Endothelial cell of umbilical vein (primary cell): ENCODE measurements at regions of chr5 and their contacts with region 1.

Region 1: DNA sequence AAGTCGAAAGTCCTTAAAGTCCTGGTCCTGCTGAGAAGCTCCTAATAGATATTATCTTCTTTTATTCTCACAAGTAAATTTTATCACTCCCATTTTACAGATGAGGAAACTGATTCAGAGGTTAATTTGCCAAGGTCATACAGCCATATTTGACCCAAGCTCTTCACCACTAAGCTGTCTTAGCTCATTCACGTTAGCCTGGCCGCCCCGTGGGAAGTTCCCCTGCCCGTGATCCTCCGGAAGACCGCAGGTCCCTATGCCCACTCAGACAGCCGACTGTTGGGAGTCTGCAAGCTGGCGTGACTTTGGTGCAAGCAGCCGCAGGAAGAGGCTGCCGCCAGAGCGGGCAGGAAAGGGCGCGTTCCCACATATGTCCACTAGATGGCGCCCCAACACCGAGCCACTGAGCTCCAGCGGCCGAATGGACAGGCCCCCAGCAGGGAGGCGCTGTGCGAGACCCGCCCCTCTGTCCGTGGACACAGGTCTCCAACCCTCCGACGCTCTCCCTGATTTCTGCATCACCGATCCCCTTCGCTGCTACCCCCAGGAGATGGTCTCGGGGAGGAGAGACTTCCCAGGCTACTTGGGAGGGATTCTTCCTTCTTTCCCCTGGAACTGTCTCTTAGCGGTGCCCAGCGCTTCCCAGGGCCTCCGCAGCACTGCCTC is 10.0 kb upstream of the ARAP3 start:
- DNase-seq: peak; percentile 87
- H3K4me3 ChIP-seq: peak overlapping the region in 2 of 3 experiments; percentile 24 to 28
- H3K27ac ChIP-seq: no peak overlapping the region
- H3K4me1 ChIP-seq: peaks cover 21% of the 10 kb centered on the region
- H3K27me3 ChIP-seq: no peaks in the 10 kb centered on the region
- CTCF ChIP-seq: peak; percentile 96 to 99
- POLR2A ChIP-seq: no peak

Region 2: DNA sequence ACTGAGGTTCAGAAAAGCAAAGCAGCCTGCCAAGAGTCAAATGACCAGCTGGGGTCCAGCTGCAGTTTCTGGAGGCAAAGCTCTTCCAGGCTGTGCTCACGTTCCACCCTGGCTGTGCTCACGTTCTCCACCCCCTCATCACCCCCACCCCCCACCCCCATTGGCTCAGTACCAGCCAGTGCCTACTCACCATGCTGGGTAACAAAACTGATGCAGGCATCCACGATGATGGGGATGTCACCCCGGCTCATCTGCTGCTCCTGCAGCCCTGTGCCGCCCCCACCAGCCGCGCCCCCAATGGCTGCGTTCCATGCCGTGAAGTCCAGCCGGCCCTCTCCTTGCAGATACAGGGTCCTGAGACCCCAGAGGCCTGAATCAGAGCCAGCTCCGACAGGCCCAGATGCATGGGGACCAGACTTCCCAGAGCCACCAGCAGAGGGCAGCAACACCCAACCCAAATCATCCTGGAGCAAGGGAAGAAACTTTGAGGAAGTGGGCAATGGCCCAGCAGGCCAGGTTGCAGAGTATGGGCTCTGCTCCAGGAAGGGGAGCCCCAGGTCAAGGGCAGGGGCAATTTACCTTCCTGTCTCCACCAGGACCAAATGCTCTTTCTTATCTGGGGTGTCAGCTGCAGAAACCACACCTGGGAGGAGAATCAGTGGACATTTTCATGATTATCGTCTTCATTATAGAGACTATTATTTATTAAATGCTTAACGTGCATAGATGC is 27.1 kb before region 1 on chr5:
- CTCF ChIA-PET with region 1: interaction called, 61 read pairs
- POLR2A ChIA-PET with region 1: no interaction called
- dilution Hi-C with region 1: no loop called
- intact Hi-C with region 1: loop called (anchors 1 kb)
- DNase-seq: peak; percentile 73
- H3K4me3 ChIP-seq: no peak overlapping the region
- H3K27ac ChIP-seq: no peak overlapping the region
- H3K4me1 ChIP-seq: peaks cover 4% of the 10 kb centered on the region
- H3K27me3 ChIP-seq: no peaks in the 10 kb centered on the region
- CTCF ChIP-seq: peak; percentile 85 to 90
- POLR2A ChIP-seq: no peak

Region 3: DNA sequence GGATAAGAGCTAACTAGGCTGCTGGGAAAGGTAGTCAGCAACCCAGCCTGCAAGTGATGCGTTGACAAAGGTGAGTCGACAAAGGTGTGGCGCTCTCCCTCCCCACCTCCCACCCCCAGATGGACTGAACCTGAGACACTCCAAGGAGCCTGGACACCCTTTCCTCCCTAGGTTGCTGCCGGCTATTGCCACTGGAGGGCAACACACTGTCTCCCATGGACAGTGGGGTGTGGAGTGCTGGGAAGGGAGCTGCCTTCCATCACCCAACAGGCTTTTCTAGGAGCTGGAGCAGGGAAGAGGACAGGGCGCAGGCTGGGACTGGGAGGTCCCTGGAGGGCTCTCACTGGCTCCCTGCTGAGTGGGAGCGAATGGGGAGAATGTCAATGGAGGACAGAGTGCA is 65.4 kb after region 1 on chr5:
- CTCF ChIA-PET with region 1: interaction called, 23 read pairs
- POLR2A ChIA-PET with region 1: no interaction called
- dilution Hi-C with region 1: no loop called
- intact Hi-C with region 1: no loop called
- DNase-seq: peak; percentile 57
- H3K4me3 ChIP-seq: no peak overlapping the region
- H3K27ac ChIP-seq: no peak overlapping the region
- H3K4me1 ChIP-seq: no peaks in the 10 kb centered on the region
- H3K27me3 ChIP-seq: peaks cover 23 to 36% of the 10 kb centered on the region in 2 experiments
- CTCF ChIP-seq: peak; percentile 54 to 77
- POLR2A ChIP-seq: no peak

Region 4: GRCh38 chr5:141889282-141889871 is 197.4 kb after region 1 on chr5:
- CTCF ChIA-PET with region 1: interaction called, 16 read pairs
- POLR2A ChIA-PET with region 1: interaction called, 8 read pairs
- dilution Hi-C with region 1: no loop called
- intact Hi-C with region 1: no loop called
- DNase-seq: peak; percentile 48
- H3K4me3 ChIP-seq: no peak overlapping the region
- H3K27ac ChIP-seq: no peak overlapping the region
- H3K4me1 ChIP-seq: no peaks in the 10 kb centered on the region
- H3K27me3 ChIP-seq: peaks cover 0 to 12% of the 10 kb centered on the region in 2 experiments
- CTCF ChIP-seq: peak; percentile 10 to 43
- POLR2A ChIP-seq: no peak

Region 5: GRCh38 chr5:141940695-141941271 is 248.8 kb after region 1 on chr5:
- CTCF ChIA-PET with region 1: interaction called, 11 read pairs
- POLR2A ChIA-PET with region 1: no interaction called
- dilution Hi-C with region 1: no loop called
- intact Hi-C with region 1: no loop called
- DNase-seq: no peak
- H3K4me3 ChIP-seq: no peak overlapping the region
- H3K27ac ChIP-seq: peak overlapping the region; percentile 19
- H3K4me1 ChIP-seq: peaks cover 27% of the 10 kb centered on the region
- H3K27me3 ChIP-seq: no peaks in the 10 kb centered on the region
- CTCF ChIP-seq: peak; percentile 5 to 30
- POLR2A ChIP-seq: no peak

Region 6: GRCh38 chr5:141992349-141992963 is 300.5 kb after region 1 on chr5:
- CTCF ChIA-PET with region 1: interaction called, 13 read pairs
- POLR2A ChIA-PET with region 1: no interaction called
- dilution Hi-C with region 1: no loop called
- intact Hi-C with region 1: no loop called
- DNase-seq: peak; percentile 72
- H3K4me3 ChIP-seq: no peak overlapping the region
- H3K27ac ChIP-seq: no peak overlapping the region
- H3K4me1 ChIP-seq: no peaks in the 10 kb centered on the region
- H3K27me3 ChIP-seq: no peaks in the 10 kb centered on the region
- CTCF ChIP-seq: peak; percentile 45 to 58
- POLR2A ChIP-seq: no peak

Region 7: DNA sequence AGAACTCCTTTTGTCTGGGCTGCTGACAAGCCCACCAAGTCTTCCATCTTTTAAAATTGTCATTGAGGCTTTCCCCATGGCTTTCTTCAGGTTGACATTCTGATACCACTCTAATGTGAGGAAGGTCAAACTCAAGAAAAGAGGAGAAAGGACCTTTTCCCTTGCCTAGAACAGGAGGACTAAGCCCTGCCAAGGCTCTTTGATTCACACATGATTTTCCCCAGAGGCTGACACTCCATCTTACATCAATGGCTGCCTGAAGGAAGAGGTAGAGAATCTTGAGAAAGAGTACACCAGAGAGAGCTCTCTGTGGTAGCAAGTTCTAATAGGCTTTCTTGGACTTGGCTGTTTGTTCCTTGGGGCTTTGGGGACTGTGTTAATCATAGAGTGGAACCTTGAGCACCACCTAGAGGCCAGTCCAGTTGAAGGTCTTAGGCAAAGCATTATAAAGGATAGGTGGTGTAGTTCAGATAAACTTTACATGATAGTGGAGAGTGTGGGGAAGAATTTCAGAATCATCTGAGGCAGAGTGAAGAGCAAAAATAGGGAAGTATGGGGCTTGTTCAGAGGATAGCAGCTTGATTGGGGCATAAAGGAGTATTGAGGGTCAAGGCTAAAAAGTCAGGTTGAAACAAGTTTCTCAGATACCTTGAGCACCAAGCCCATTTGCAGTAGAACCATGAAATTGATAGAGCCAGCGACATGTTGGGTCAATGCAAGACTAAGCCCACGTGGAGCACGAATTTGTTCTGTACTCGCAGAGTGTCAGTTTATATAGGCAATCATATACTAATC is 453.3 kb after region 1 on chr5:
- CTCF ChIA-PET with region 1: interaction called, 24 read pairs
- POLR2A ChIA-PET with region 1: no interaction called
- dilution Hi-C with region 1: no loop called
- intact Hi-C with region 1: loop called (anchors 1 kb)
- DNase-seq: peak; percentile 71
- H3K4me3 ChIP-seq: no peak overlapping the region
- H3K27ac ChIP-seq: no peak overlapping the region
- H3K4me1 ChIP-seq: no peaks in the 10 kb centered on the region
- H3K27me3 ChIP-seq: no peaks in the 10 kb centered on the region
- CTCF ChIP-seq: peak; percentile 71 to 74
- POLR2A ChIP-seq: no peak